ENCODE measurements at regions of chr1 and their contacts with region 1.

Region 1: GRCh38 chr1:11272832-11273594 is at the start of gene UBIAD1:
- DNase-seq: peak; percentile 72 to 87
- ATAC-seq: peak; percentile 95
- H3K4me3 ChIP-seq: peak within 1 kb of the TSS; percentile 97
- H3K27ac ChIP-seq: peak within 1 kb of the TSS; percentile 98 to 99
- H3K4me1 ChIP-seq: peaks cover 12% of the 10 kb centered on the region
- CTCF ChIP-seq: no peak
- EP300 ChIP-seq: no peak
- POLR2A ChIP-seq: peak; percentile 61
- RAD21 ChIP-seq: no peak
- polyA plus RNA-seq, gene UBIAD1: 13.9 and 14.9 TPM in 2 replicates

Region 2: GRCh38 chr1:11262171-11263049 is 10.6 kb before region 1 on chr1 and contains the start of gene MTOR:
- CTCF ChIA-PET with region 1: interaction called, 4 read pairs
- POLR2A ChIA-PET with region 1: interaction called, 34 read pairs
- DNase-seq: peak; percentile 94 to 99
- ATAC-seq: peak; percentile 100
- H3K4me3 ChIP-seq: peak within 1 kb of the TSS; percentile 99
- H3K27ac ChIP-seq: peak within 1 kb of the TSS; percentile 94 to 96
- H3K4me1 ChIP-seq: peaks cover 5% of the 10 kb centered on the region; the same call in 1 of the 3 replicates
- CTCF ChIP-seq: no peak
- EP300 ChIP-seq: no peak
- POLR2A ChIP-seq: peak; percentile 59
- RAD21 ChIP-seq: no peak
- polyA plus RNA-seq, gene MTOR: 28.5 and 32.4 TPM in 2 replicates

Region 3: GRCh38 chr1:11295905-11296304 is 22.9 kb after region 1 on chr1:
- CTCF ChIA-PET with region 1: no interaction called
- POLR2A ChIA-PET with region 1: no interaction called
- DNase-seq: no peak
- ATAC-seq: no peak
- H3K4me3 ChIP-seq: no peak overlapping the region
- H3K27ac ChIP-seq: no peak overlapping the region
- H3K4me1 ChIP-seq: no peaks in the 10 kb centered on the region
- CTCF ChIP-seq: no peak
- EP300 ChIP-seq: no peak
- POLR2A ChIP-seq: no peak
- RAD21 ChIP-seq: no peak

Region 4: GRCh38 chr1:11355559-11356475 is 82.8 kb after region 1 on chr1:
- CTCF ChIA-PET with region 1: no interaction called
- POLR2A ChIA-PET with region 1: no interaction called
- DNase-seq: no peak
- ATAC-seq: no peak
- H3K4me3 ChIP-seq: no peak overlapping the region
- H3K27ac ChIP-seq: no peak overlapping the region
- H3K4me1 ChIP-seq: no peaks in the 10 kb centered on the region
- CTCF ChIP-seq: no peak
- EP300 ChIP-seq: no peak
- POLR2A ChIP-seq: no peak
- RAD21 ChIP-seq: no peak

Region 5: DNA sequence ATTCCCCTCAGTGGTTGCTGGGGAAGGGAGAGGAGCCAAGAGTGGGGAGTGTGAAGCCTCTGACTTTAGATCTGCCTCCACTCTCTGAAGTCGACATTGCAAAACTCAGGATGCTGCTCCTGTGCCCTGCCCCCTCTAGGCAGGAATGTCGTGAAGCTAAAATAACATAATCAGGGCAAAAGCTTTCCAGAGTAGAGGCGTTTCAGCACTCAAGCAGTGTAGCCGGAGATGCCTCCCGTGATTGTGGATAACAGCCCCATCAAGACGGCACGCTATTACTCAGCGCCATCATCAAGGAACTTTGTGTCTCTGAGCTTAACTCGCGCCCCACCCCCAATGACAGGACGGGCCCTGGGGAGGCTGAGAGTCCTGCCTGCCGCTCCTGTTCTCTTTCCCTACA is 321.2 kb after region 1 on chr1:
- CTCF ChIA-PET with region 1: no interaction called
- POLR2A ChIA-PET with region 1: no interaction called
- DNase-seq: peak in 1 of 2 experiments; percentile 7
- ATAC-seq: peak; percentile 49 to 69; a peak in 4 of 6 replicates
- H3K4me3 ChIP-seq: no peak overlapping the region
- H3K27ac ChIP-seq: no peak overlapping the region
- H3K4me1 ChIP-seq: no peaks in the 10 kb centered on the region
- CTCF ChIP-seq: no peak
- EP300 ChIP-seq: no peak
- POLR2A ChIP-seq: no peak
- RAD21 ChIP-seq: no peak